Naive thymus-derived CD4-positive, alpha-beta T cell (primary cell): ENCODE measurements at regions of chr10 and their contacts with region 1.

Region 1: DNA sequence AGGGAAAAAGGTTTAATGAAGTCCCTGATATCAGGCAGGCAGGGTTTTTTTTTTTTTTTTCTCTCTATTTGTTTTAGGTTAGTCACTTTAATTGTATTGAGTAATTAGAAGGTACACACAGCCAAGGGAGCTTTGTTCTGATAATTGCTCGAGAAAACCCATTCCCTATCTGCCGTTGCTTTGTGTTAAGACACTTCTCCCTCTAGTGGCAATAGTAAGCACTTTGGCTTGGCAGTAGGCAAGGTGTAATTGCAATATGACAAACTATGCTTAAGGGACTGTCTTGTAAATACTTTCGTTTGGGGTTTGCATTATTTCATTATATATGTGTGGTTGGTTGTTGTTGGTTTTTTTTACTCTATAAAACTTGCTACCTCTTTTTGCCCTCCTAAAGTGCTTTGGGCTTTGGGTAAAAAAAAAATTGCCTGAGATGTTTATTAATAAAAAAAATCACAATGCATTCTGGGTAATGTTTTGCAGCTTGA is 113.4 kb downstream of the BTRC start:
- DNase-seq: peak in 7 of 9 donors; percentile 22 to 64 (median 52)
- ATAC-seq: peak; percentile 90
- H3K4me3 ChIP-seq: no peak overlapping the region
- H3K4me3 Mint-ChIP-seq: no peak overlapping the region
- H3K27ac ChIP-seq: no peak overlapping the region
- H3K27ac Mint-ChIP-seq: no peak overlapping the region
- H3K4me1 ChIP-seq: no peaks in the 10 kb centered on the region
- H3K4me1 Mint-ChIP-seq: peaks cover 0 to 12% (median 9%) of the 10 kb centered on the region in 7 donors
- H3K27me3 ChIP-seq: no peaks in the 10 kb centered on the region
- H3K27me3 Mint-ChIP-seq: peaks cover 0 to 3% (median 0%) of the 10 kb centered on the region in 5 donors

Region 2: GRCh38 chr10:101161494-101162299 is 305.6 kb before region 1 on chr10:
- CTCF ChIA-PET with region 1: no interaction called
- POLR2A ChIA-PET with region 1: no interaction called
- intact Hi-C with region 1: loop called in 1 of 2 experiments (anchors 2 kb)
- DNase-seq: peak; percentile 45 to 71 (median 65)
- ATAC-seq: peak; percentile 96
- H3K4me3 ChIP-seq: no peak overlapping the region
- H3K4me3 Mint-ChIP-seq: peak overlapping the region in 5 of 10 donors; percentile 20 to 51 (median 30)
- H3K27ac ChIP-seq: no peak overlapping the region
- H3K27ac Mint-ChIP-seq: peak overlapping the region in 1 of 9 donors; percentile 26
- H3K4me1 ChIP-seq: no peaks in the 10 kb centered on the region
- H3K4me1 Mint-ChIP-seq: peaks cover 9 to 16% (median 12%) of the 10 kb centered on the region in 7 donors
- H3K27me3 ChIP-seq: peaks cover 6 to 15% of the 10 kb centered on the region in 2 donors
- H3K27me3 Mint-ChIP-seq: peaks cover 49 to 78% (median 70%) of the 10 kb centered on the region in 5 donors

Region 3: GRCh38 chr10:101272229-101272868 is 195.0 kb before region 1 on chr10:
- CTCF ChIA-PET with region 1: interaction called, 3 read pairs
- POLR2A ChIA-PET with region 1: no interaction called
- intact Hi-C with region 1: loop called in 1 of 2 experiments (anchors 1 kb)
- DNase-seq: peak in 8 of 9 donors; percentile 18 to 57 (median 44)
- ATAC-seq: peak; percentile 81
- H3K4me3 ChIP-seq: no peak overlapping the region
- H3K4me3 Mint-ChIP-seq: no peak overlapping the region
- H3K27ac ChIP-seq: no peak overlapping the region
- H3K27ac Mint-ChIP-seq: no peak overlapping the region
- H3K4me1 ChIP-seq: no peaks in the 10 kb centered on the region
- H3K4me1 Mint-ChIP-seq: peaks cover 0 to 8% (median 2%) of the 10 kb centered on the region in 7 donors
- H3K27me3 ChIP-seq: no peaks in the 10 kb centered on the region
- H3K27me3 Mint-ChIP-seq: peaks cover 20 to 39% (median 32%) of the 10 kb centered on the region in 5 donors

Region 4: GRCh38 chr10:101291331-101292193 is 175.8 kb before region 1 on chr10:
- CTCF ChIA-PET with region 1: interaction called, 7 read pairs
- POLR2A ChIA-PET with region 1: no interaction called
- intact Hi-C with region 1: loop called in 1 of 2 experiments (anchors 5 kb)
- DNase-seq: peak in 5 of 9 donors; percentile 22 to 29 (median 25)
- ATAC-seq: peak; percentile 60
- H3K4me3 ChIP-seq: peak overlapping the region; percentile 41
- H3K4me3 Mint-ChIP-seq: peak overlapping the region; percentile 73 to 92 (median 84)
- H3K27ac ChIP-seq: no peak overlapping the region
- H3K27ac Mint-ChIP-seq: no peak overlapping the region
- H3K4me1 ChIP-seq: peaks cover 0 to 10% of the 10 kb centered on the region in 2 donors
- H3K4me1 Mint-ChIP-seq: peaks cover 0 to 12% (median 7%) of the 10 kb centered on the region in 7 donors
- H3K27me3 ChIP-seq: peaks cover 11 to 15% of the 10 kb centered on the region in 2 donors
- H3K27me3 Mint-ChIP-seq: peaks cover 69 to 87% (median 79%) of the 10 kb centered on the region in 5 donors